Left cardiac atrium (tissue), 4 donors: ENCODE measurements at regions of chr16 and their contacts with region 1.

Region 1: DNA sequence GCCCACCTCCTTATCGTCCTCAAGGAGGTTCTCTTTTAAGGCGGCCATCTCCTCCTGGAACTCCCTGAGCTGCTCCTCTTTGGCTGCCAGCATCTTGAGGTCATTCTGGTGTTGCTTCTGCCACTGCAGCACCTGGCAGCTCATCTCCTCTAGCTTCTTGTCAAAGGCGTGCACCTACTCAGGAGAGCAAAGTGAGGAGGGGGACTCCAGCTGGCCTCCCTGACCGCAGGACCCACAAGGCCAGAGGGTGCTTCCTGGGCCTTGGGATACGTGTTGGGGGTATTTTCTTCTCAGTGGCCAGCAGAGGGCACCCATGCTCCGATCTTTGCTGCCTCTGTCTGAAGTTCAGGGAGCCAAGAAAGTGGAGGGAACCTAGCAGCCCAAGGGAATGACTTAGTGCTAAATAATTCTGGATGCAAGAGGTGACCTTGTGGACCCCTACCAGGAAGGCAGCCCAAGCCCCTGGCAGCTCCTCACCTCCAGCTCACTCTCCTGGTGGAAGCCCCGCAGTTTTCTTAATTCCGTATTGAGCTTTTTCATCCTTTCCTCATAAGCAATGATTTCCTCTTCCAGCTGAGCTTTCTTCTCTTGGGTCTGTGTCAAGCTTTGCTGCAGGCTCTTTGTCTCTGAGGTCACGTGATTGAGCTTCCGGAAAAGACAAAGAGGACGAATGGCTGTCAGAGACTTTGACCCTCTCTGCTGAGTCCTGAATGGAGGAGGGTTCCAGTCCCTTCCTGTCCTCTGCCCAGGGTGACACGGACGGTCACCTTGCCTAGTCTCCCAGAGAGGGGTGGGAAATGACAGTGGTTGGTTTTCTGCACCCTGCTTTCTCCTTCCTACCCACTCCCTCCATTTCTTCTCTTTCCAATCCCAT is 31.4 kb downstream of the DHX38 start:
- DNase-seq: peak; percentile 74
- ATAC-seq: peak; percentile 81 to 84

Region 2: GRCh38 chr16:72189865-72190371 is 64.9 kb after region 1 on chr16:
- intact Hi-C with region 1: no loop called
- DNase-seq: no peak
- ATAC-seq: peak in 1 of 2 donors; percentile 69

Region 3: GRCh38 chr16:73888840-73889490 is 1764.0 kb after region 1 on chr16:
- intact Hi-C with region 1: loop called in 1 of 2 experiments (anchors 10 kb)
- DNase-seq: no peak
- ATAC-seq: peak in 1 of 2 donors; percentile 42

Region 4: DNA sequence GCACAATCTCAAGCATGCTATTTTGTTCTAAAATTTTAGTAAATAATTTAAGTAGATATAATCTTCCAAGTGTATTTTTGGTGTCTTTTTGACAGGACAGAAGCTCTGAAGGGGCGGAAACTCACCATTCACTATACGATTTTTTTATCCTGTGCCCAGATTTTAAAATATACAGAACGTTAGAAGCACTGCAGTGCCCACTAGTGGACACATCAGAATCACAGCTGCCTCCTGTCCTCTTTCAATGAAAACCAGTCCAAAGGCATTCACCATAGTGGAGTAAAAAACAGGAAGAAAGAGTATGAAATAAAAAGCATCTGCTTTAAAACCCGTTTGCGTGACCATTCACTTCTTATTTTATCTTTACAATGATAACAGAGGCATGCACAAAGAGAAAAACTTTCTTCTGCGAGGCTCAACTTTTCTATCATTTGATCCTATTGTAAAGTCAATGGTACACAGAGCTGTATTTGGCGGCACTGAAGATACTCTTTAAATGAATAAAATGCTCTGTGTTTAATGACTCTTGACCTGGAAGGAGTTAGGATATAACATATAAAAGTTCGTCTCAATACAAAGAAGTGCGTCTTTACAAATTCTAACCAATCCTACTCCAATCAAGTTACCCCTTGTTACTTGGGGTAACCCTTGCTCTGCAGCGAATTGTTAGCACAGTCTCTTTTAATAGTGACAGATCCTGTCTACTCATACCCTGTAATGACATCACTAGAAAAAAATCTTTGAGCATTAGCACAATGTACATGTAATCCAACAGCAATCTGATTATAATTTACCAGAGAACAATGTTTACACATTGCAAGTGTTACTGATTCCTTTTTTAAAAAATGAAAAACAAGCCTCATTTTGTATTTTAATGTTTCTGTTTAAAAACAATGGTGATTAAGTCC is 1831.8 kb after region 1 on chr16:
- intact Hi-C with region 1: loop called in 1 of 2 experiments (anchors 5 kb)
- DNase-seq: peak; percentile 33
- ATAC-seq: peak; percentile 41 to 50